IMR-90 (cell line): ENCODE measurements at regions of chr6 and their contacts with region 1.

Region 1: GRCh38 chr6:33656844-33657243 is 35.7 kb downstream of the ITPR3 start:
- DNase-seq: no peak
- ATAC-seq: no peak
- H3K4me3 ChIP-seq: no peak overlapping the region
- H3K27ac ChIP-seq: no peak overlapping the region
- H3K4me1 ChIP-seq: no peaks in the 10 kb centered on the region
- H3K27me3 ChIP-seq: no peaks in the 10 kb centered on the region
- CTCF ChIP-seq: no peak
- POLR2A ChIP-seq: no peak
- RAD21 ChIP-seq: no peak

Region 2: GRCh38 chr6:33183071-33183683 is 473.7 kb before region 1 on chr6:
- CTCF ChIA-PET with region 1: no interaction called
- POLR2A ChIA-PET with region 1: no interaction called
- dilution Hi-C with region 1: no loop called
- in situ Hi-C with region 1: no loop called
- intact Hi-C with region 1: no loop called
- DNase-seq: no peak
- ATAC-seq: no peak
- H3K4me3 ChIP-seq: no peak overlapping the region
- H3K27ac ChIP-seq: no peak overlapping the region
- H3K4me1 ChIP-seq: no peaks in the 10 kb centered on the region
- H3K27me3 ChIP-seq: peaks cover 19% of the 10 kb centered on the region
- CTCF ChIP-seq: no peak
- POLR2A ChIP-seq: no peak
- RAD21 ChIP-seq: no peak

Region 3: GRCh38 chr6:33213166-33213988 is 443.5 kb before region 1 on chr6:
- CTCF ChIA-PET with region 1: no interaction called
- POLR2A ChIA-PET with region 1: no interaction called
- dilution Hi-C with region 1: no loop called
- in situ Hi-C with region 1: no loop called
- intact Hi-C with region 1: no loop called
- DNase-seq: no peak
- ATAC-seq: peak; percentile 69
- H3K4me3 ChIP-seq: peak overlapping the region; percentile 59
- H3K27ac ChIP-seq: peak overlapping the region; percentile 10; the same call in 1 of the 2 replicates
- H3K4me1 ChIP-seq: peaks cover 2% of the 10 kb centered on the region; the same call in 1 of the 2 replicates
- H3K27me3 ChIP-seq: peaks cover 18% of the 10 kb centered on the region
- CTCF ChIP-seq: no peak
- POLR2A ChIP-seq: 0 out of 2 replicates have a peak, but pooled peaks have one; percentile 10
- RAD21 ChIP-seq: no peak

Region 4: GRCh38 chr6:33425668-33426577 is 230.9 kb before region 1 on chr6:
- CTCF ChIA-PET with region 1: no interaction called
- POLR2A ChIA-PET with region 1: interaction called, 19 read pairs
- dilution Hi-C with region 1: no loop called
- in situ Hi-C with region 1: no loop called
- intact Hi-C with region 1: no loop called
- DNase-seq: peak; percentile 75
- ATAC-seq: peak; percentile 73
- H3K4me3 ChIP-seq: peak overlapping the region; percentile 56
- H3K27ac ChIP-seq: peak overlapping the region; percentile 91
- H3K4me1 ChIP-seq: peaks cover 35% of the 10 kb centered on the region
- H3K27me3 ChIP-seq: no peaks in the 10 kb centered on the region
- CTCF ChIP-seq: peak; percentile 68
- POLR2A ChIP-seq: peak; percentile 47; the same call in 1 of the 2 replicates
- RAD21 ChIP-seq: peak; percentile 78

Region 5: GRCh38 chr6:33543116-33543515 is 113.7 kb before region 1 on chr6:
- CTCF ChIA-PET with region 1: no interaction called
- POLR2A ChIA-PET with region 1: no interaction called
- dilution Hi-C with region 1: no loop called
- in situ Hi-C with region 1: no loop called
- intact Hi-C with region 1: no loop called
- DNase-seq: no peak
- ATAC-seq: no peak
- H3K4me3 ChIP-seq: no peak overlapping the region
- H3K27ac ChIP-seq: no peak overlapping the region
- H3K4me1 ChIP-seq: no peaks in the 10 kb centered on the region
- H3K27me3 ChIP-seq: peaks cover 10% of the 10 kb centered on the region
- CTCF ChIP-seq: no peak
- POLR2A ChIP-seq: no peak
- RAD21 ChIP-seq: no peak